AG04450 (cell line): ENCODE measurements at regions of chr1 and their contacts with region 1.

Region 1: GRCh38 chr1:171081314-171081753 is 9.4 kb upstream of the FMO3 start:
- DNase-seq: peak; percentile 33
- H3K4me3 ChIP-seq: no peak overlapping the region
- H3K27ac ChIP-seq: no peak overlapping the region
- H3K27me3 ChIP-seq: no peaks in the 10 kb centered on the region
- CTCF ChIP-seq: peak; percentile 55

Region 2: DNA sequence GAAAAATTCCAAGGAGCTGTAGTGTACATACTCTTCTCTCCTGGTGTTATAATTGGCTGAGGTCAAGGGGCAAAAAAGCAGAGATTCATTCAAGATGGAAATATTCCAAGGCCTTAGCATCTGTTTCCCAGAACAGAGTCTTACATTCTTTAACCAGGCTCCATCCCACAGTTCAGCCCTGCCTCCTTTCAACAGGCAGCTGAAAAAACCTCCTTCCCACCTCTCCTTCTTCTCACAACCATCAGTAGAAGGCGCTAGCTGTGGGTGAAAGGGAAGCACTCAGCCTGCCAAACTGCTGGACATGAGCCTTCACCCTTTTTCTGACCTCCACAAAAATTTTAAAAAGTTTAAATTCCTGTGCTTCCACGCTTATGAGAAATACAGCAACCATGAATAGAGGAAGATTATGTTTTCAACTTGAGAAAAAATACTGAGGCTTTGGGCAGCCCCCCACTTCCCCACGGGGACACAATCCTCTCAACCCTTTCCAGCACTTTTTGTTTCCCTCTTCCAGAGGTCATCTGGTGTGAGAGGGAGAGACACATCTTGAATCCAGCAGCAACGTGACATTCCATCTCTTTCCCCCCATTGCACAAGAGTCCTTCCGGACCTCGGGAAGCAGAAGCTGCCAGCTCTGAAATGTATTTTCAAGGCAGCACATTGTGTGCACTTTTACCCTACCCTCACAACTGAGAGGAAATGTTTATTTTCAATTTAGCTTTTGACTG is 60.5 kb after region 1 on chr1:
- CTCF ChIA-PET with region 1: interaction called, 21 read pairs
- POLR2A ChIA-PET with region 1: no interaction called
- DNase-seq: peak; percentile 96
- H3K4me3 ChIP-seq: no peak overlapping the region
- H3K27ac ChIP-seq: peak overlapping the region; percentile 87
- H3K27me3 ChIP-seq: no peaks in the 10 kb centered on the region
- CTCF ChIP-seq: peak; percentile 63

Region 3: GRCh38 chr1:171188388-171189266 is 107.3 kb after region 1 on chr1:
- CTCF ChIA-PET with region 1: interaction called, 20 read pairs
- POLR2A ChIA-PET with region 1: no interaction called
- DNase-seq: peak; percentile 20
- H3K4me3 ChIP-seq: no peak overlapping the region
- H3K27ac ChIP-seq: no peak overlapping the region
- H3K27me3 ChIP-seq: no peaks in the 10 kb centered on the region
- CTCF ChIP-seq: peak; percentile 77

Region 4: DNA sequence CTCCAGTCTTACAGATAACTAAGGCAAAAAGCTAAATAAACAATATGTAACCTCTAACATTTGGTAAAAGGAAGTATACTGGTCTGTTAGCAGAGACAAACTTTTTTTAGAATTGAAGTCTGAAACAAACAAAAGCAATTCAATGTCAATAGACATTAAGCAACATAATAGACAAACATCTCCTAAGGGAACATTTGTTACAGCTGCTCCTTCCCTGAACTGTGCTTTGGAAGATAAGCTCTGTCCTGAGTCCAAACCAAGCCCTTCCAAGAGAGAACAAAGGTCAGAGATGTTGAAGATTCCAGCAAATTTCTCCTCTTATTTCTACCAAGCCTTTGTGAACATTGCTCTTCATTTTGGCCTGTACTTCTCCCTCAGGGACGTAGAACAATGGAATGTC is 129.0 kb after region 1 on chr1:
- CTCF ChIA-PET with region 1: interaction called, 11 read pairs
- POLR2A ChIA-PET with region 1: no interaction called
- DNase-seq: no peak
- H3K4me3 ChIP-seq: no peak overlapping the region
- H3K27ac ChIP-seq: no peak overlapping the region
- H3K27me3 ChIP-seq: no peaks in the 10 kb centered on the region
- CTCF ChIP-seq: no peak

Region 5: GRCh38 chr1:171245458-171246064 is 164.2 kb after region 1 on chr1:
- CTCF ChIA-PET with region 1: interaction called, 18 read pairs
- POLR2A ChIA-PET with region 1: no interaction called
- DNase-seq: no peak
- H3K4me3 ChIP-seq: no peak overlapping the region
- H3K27ac ChIP-seq: no peak overlapping the region
- H3K27me3 ChIP-seq: no peaks in the 10 kb centered on the region
- CTCF ChIP-seq: peak; percentile 82